ENCODE measurements at regions of chr6 and their contacts with region 1.

Region 1: DNA sequence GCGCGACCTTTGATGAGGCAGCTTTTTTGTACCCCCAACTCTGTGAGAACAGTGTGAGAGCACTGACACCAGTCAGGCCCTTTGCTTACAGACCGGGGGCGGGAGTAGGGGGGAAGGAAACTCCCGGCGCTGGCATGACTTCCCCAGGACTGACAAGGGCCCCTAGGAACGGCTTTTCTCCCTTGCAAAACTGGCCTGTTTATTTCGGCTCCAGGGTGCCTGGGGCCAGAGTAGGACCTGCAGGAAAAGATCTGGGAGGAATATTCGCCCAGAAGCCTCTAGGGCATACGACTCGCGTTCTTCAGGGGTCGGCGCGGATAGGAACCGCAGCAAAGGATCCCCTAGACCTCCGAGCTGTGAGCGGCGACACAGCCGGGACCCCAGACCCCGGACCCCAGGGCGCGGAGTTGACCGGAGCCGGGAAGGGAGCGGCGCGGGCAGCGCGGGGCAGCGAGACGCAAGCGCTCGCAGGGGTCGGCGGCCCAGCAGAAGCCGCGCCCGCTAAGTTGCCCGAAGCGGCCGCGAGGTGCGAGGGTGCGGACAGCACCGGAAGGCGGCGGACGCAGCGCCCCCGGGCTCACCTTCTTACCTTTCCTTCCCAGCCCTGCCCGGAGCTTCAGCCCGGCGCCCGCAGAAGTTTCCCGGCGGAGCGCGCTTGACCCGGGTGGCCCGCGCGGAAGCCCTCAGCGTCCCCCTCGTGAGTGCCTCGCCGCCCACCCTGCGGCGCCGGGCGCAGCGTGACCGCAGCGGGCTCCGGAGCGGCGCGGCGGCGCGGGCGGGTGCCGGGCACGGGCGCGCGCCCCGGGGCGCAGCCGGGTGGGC is at the start of gene POPDC3:
- DNase-seq: peak; percentile 62
- H3K4me3 Mint-ChIP-seq: peak within 1 kb of the TSS; percentile 71
- H3K27ac Mint-ChIP-seq: no peak within 1 kb of the TSS
- H3K4me1 Mint-ChIP-seq: peaks cover 28% of the 10 kb centered on the region
- H3K27me3 Mint-ChIP-seq: no peaks in the 10 kb centered on the region
- CTCF ChIP-seq: no peak
- total RNA-seq, gene POPDC3: 2.8 and 3.8 TPM in 2 replicates

Region 2: DNA sequence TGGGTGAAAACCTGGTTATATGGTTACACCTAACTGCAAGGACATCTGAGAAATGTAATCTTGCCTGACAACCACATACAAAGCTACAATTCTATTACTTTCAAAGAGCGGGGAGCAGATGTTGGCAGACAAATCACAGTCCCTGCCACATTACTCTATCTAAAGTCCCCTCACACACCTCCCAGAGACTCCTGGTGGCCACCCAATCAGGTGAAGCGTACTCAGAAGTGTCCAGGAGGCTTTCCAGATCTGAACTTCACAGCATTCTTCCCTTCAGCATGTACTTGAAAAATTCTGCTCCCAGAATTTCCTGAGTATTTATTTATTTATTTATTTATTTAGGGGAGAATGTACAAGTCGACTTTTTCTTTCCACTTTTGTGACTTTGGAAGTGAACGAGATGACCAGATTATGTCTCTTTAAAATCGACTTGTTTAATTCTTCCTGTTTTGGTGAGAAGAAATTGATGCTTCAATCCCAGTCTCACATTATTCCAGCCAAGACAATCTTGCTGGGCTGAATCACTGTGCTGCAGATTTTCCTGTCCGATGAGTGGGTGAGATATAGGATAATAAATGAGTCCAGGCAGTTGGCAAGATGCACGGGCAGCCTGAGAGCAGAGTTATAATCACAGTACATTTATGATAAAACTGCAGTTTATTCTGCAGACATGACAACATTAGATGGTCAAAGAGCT is 47.3 kb after region 1 on chr6:
- CTCF ChIA-PET with region 1: no interaction called
- intact Hi-C with region 1: no loop called
- DNase-seq: no peak
- H3K4me3 Mint-ChIP-seq: no peak overlapping the region
- H3K27ac Mint-ChIP-seq: no peak overlapping the region
- H3K4me1 Mint-ChIP-seq: no peaks in the 10 kb centered on the region
- H3K27me3 Mint-ChIP-seq: peaks cover 28% of the 10 kb centered on the region
- CTCF ChIP-seq: no peak

Region 3: GRCh38 chr6:105263685-105264610 is 84.5 kb after region 1 on chr6:
- CTCF ChIA-PET with region 1: no interaction called
- intact Hi-C with region 1: loop called (anchors 5 kb)
- DNase-seq: no peak
- H3K4me3 Mint-ChIP-seq: no peak overlapping the region
- H3K27ac Mint-ChIP-seq: no peak overlapping the region
- H3K4me1 Mint-ChIP-seq: peaks cover 13% of the 10 kb centered on the region
- H3K27me3 Mint-ChIP-seq: no peaks in the 10 kb centered on the region
- CTCF ChIP-seq: no peak

Measured in Calu3 (cell line).